ENCODE measurements at regions of chr10 and their contacts with region 1.

Region 1: DNA sequence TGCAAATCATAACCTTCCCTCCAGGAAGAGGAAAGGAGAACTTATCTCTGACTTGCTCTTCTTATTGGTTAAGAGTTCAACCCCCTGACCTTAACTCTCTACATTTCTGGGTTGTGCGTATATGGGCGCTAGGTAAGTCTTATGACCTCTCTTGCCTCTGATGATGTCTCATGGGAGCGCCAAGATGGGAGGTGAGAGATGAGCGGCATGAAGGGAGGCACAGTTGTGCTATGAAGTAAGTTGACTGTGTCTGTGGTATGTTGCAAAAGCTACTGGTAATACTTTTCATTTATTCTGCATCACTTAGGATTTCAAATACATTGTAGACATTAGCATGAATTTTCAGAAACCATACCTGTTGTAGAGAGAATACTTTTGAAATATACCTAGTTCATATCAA is 59.0 kb downstream of the EXOC6 start:
- DNase-seq: no peak

Region 2: DNA sequence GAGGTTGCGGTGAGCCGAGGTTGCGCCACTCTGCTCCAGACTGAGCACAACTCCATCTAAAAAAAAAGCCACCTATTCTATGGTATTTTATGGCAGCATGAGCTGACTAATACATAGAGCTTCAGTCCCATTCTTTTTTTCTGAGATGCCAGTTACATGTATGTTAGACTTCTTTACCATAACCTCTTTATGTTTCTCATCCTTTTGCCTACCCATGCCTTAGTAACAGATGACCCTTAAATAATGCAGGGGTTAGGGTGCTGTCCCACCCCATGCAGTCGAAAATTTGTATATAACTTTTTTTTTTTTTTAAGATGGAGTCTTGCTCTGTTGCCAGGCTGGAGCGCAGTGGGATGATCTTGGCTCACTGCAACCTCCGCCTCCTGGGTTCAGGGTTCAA is 240.2 kb before region 1 on chr10:
- intact Hi-C with region 1: no loop called
- DNase-seq: no peak

Region 3: DNA sequence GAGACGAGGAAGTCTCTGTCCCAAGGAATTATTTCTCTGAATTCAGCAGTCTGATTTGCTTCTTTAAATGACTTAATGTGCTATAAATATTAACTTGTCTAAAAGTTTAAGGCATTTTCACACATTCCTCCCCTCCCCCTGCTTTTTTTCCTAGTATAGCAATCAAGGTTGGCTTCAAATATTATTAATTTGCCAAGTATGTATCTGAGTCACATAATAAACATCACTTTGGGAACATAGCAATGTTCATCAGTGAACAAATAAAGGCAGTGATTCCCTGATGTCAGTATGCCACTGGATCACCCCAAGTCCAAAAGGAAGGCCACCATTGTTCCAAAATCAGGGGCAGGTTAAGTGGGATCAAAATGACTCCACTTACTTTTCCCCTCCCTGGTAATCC is 745.6 kb after region 1 on chr10:
- intact Hi-C with region 1: no loop called
- DNase-seq: no peak

Region 4: GRCh38 chr10:94300042-94300441 is 1392.8 kb after region 1 on chr10:
- intact Hi-C with region 1: loop called in 1 of 2 experiments (anchors 5 kb)
- DNase-seq: no peak